Activated CD4-positive, alpha-beta T cell treated with anti-CD3 and anti-CD28 coated beads for 36 hours (primary cell): ENCODE measurements at regions of chr2 and their contacts with region 1.

Region 1: DNA sequence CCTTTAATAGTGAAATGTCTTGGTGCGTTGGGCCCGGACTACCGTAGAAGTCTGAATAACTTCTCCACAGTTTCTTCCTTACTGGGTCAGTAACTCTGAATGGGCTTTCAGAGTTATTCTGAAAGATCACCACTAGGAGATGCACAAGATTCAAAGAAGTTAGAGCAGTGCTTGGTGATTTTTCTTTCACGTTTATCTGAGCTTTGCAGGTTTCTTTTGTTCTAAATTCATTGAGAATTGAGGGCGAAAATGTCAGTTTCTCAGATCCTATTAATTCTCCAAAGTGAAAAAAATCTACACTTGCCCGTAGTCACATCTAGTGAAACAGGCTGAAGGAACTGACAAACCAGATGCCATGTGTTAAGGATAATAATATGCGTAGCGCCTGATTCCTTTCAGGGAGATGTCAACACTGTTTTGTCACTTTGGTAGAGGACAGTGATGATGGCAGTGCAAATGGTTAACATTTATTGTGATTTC is 70.1 kb downstream of the QPCT start:
- DNase-seq: no peak
- ATAC-seq: peak; percentile 60
- H3K4me3 Mint-ChIP-seq: no peak overlapping the region
- H3K27ac Mint-ChIP-seq: no peak overlapping the region
- H3K4me1 Mint-ChIP-seq: peaks cover 7% of the 10 kb centered on the region
- H3K27me3 Mint-ChIP-seq: no peaks in the 10 kb centered on the region

Region 2: GRCh38 chr2:37274359-37274965 is 140.0 kb before region 1 on chr2:
- CTCF ChIA-PET with region 1: no interaction called
- POLR2A ChIA-PET with region 1: no interaction called
- intact Hi-C with region 1: no loop called
- DNase-seq: no peak
- ATAC-seq: no peak
- H3K4me3 Mint-ChIP-seq: no peak overlapping the region
- H3K27ac Mint-ChIP-seq: no peak overlapping the region
- H3K4me1 Mint-ChIP-seq: no peaks in the 10 kb centered on the region
- H3K27me3 Mint-ChIP-seq: no peaks in the 10 kb centered on the region

Region 3: GRCh38 chr2:37456479-37456878 is 42.0 kb after region 1 on chr2:
- CTCF ChIA-PET with region 1: no interaction called
- POLR2A ChIA-PET with region 1: no interaction called
- intact Hi-C with region 1: no loop called
- DNase-seq: peak; percentile 34
- ATAC-seq: peak; percentile 43
- H3K4me3 Mint-ChIP-seq: no peak overlapping the region
- H3K27ac Mint-ChIP-seq: peak overlapping the region; percentile 68
- H3K4me1 Mint-ChIP-seq: peaks cover 59% of the 10 kb centered on the region
- H3K27me3 Mint-ChIP-seq: no peaks in the 10 kb centered on the region

Region 4: DNA sequence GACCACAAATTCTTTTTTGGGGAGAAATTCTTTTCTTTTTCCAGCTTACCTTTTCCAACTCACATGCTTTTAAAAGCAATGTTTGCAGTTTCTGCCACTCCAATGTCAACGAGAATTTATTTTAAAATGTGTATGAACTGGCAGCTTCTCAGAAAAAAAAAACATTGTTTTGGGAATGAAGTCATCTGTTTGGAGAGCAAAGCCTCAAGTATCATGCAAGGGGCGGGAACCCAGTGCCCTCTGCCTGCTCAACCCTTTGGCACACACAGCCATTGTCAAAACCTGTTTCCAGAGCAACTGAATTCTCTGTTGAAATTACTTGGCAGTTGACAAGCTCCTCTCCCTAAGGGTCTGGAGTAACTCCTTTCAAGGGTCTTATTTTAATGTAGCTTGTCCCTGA is 58.4 kb after region 1 on chr2:
- CTCF ChIA-PET with region 1: no interaction called
- POLR2A ChIA-PET with region 1: no interaction called
- intact Hi-C with region 1: no loop called
- DNase-seq: no peak
- ATAC-seq: no peak
- H3K4me3 Mint-ChIP-seq: no peak overlapping the region
- H3K27ac Mint-ChIP-seq: no peak overlapping the region
- H3K4me1 Mint-ChIP-seq: no peaks in the 10 kb centered on the region
- H3K27me3 Mint-ChIP-seq: no peaks in the 10 kb centered on the region

Region 5: DNA sequence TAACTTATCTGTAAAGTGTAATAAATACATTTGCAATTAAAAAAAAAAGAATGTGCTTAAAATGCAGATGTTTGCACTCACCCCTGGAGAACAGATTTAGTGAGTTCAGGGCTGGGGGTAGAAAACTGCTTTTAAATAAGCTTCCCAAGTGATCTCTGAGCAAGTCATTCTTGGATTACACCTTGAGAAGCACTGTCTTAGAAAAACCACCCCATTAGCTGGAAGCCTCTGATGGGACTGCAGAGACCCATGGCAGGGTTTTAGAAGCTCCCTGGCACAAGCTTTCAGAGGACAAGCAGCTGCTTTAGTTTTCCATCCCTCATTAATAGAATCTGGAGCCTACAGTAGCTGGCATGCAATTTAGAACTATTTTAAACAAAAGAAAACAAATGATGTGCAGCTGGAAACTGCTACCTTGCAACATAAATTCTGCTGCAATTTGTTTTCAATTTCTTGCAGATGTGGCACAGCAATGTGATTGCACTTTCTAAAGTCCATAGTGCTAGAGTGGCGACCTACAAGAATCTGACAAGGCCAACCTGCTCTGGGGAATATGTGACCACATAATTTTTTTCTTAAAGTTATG is 115.4 kb after region 1 on chr2:
- CTCF ChIA-PET with region 1: no interaction called
- POLR2A ChIA-PET with region 1: no interaction called
- intact Hi-C with region 1: loop called in 1 of 2 experiments (anchors 10 kb)
- DNase-seq: no peak
- ATAC-seq: no peak
- H3K4me3 Mint-ChIP-seq: no peak overlapping the region
- H3K27ac Mint-ChIP-seq: no peak overlapping the region
- H3K4me1 Mint-ChIP-seq: no peaks in the 10 kb centered on the region
- H3K27me3 Mint-ChIP-seq: no peaks in the 10 kb centered on the region

Region 6: DNA sequence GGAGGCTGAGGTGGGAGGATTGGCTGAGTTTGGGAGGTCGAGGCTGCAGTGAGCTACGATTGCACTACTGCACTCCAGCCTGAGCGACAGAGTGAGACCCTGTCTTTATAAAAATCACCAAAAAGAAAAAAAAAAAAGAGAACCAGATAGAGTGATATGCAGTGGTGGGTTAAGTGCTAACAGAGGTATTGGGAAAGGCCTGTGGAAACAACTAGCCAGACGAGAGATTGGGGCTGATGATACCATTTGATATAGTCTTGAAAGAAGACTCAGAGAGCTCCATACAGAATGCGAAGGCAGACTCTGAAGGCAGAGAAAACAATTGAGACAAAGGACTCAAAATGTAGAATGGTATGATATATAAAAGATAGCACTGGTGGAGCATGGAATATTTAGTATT is 122.8 kb after region 1 on chr2:
- CTCF ChIA-PET with region 1: interaction called, 6 read pairs
- POLR2A ChIA-PET with region 1: no interaction called
- intact Hi-C with region 1: loop called (anchors 2 to 10 kb)
- DNase-seq: no peak
- ATAC-seq: no peak
- H3K4me3 Mint-ChIP-seq: no peak overlapping the region
- H3K27ac Mint-ChIP-seq: no peak overlapping the region
- H3K4me1 Mint-ChIP-seq: peaks cover 2% of the 10 kb centered on the region
- H3K27me3 Mint-ChIP-seq: no peaks in the 10 kb centered on the region

Region 7: DNA sequence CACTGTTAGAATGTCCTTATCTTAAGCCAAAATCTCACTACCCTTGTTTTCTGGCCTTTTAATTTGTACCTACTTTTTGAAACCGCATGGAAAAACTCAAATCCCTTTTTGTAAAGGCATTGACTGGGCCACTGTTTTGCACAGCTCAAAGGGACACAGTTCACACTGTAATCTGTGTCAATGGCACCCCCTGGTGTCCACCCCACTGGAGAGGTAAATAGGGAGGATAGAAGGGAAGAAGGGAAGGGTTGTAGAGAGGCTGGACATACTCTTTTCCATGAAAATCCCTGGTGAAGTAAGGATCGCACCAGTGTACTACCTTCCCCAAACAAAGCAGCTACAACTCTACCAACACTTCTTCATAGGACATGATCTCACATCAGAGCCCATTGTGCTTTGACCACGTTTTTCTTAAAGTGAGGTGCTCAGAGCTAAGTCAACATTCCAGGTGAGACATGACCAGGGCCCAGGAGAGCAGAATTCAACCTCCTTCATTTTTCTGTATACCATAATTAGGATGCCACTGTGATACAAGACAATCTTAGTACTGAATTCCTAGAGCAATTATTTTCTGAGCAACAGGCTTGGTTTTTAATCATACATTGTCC is 418.2 kb after region 1 on chr2:
- CTCF ChIA-PET with region 1: interaction called, 36 read pairs
- POLR2A ChIA-PET with region 1: no interaction called
- intact Hi-C with region 1: loop called (anchors 1 kb)
- DNase-seq: peak; percentile 90
- ATAC-seq: peak; percentile 76
- H3K4me3 Mint-ChIP-seq: no peak overlapping the region
- H3K27ac Mint-ChIP-seq: peak overlapping the region; percentile 32
- H3K4me1 Mint-ChIP-seq: peaks cover 22% of the 10 kb centered on the region
- H3K27me3 Mint-ChIP-seq: no peaks in the 10 kb centered on the region

Region 8: DNA sequence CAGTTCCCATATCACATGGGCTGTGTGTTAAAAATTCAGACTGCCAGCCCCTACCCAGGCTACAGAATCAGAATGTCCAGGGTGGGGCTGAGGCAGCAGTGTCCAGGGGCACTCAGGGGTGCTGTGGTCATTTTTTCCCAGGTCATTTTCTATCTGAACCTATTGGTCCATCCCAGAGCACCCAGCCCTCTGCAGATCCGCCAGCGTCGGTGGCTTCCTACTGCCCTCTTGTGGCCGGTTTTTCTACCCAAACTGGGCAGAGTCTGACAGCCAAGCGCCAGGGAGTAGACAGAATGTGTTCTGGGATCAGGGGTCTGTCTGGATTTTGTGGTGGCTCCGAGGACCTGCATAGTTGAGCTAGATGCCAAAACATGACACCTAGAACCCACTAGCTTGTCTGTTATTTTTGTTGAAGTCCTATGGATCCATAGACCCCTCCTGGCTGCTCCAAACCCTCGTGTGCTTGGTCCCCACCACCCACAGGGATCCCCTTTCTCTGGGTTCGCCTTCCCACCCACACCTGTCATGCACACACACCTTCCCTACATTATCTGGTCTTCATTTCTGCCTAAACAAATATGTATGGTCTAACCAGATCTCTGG is 476.5 kb after region 1 on chr2:
- CTCF ChIA-PET with region 1: interaction called, 6 read pairs
- POLR2A ChIA-PET with region 1: no interaction called
- intact Hi-C with region 1: loop called in 1 of 2 experiments (anchors 1 kb)
- DNase-seq: peak; percentile 83
- ATAC-seq: peak; percentile 43
- H3K4me3 Mint-ChIP-seq: no peak overlapping the region
- H3K27ac Mint-ChIP-seq: no peak overlapping the region
- H3K4me1 Mint-ChIP-seq: peaks cover 46% of the 10 kb centered on the region
- H3K27me3 Mint-ChIP-seq: peaks cover 8% of the 10 kb centered on the region